ENCODE measurements at regions of chr7 and their contacts with region 1.

Region 1: DNA sequence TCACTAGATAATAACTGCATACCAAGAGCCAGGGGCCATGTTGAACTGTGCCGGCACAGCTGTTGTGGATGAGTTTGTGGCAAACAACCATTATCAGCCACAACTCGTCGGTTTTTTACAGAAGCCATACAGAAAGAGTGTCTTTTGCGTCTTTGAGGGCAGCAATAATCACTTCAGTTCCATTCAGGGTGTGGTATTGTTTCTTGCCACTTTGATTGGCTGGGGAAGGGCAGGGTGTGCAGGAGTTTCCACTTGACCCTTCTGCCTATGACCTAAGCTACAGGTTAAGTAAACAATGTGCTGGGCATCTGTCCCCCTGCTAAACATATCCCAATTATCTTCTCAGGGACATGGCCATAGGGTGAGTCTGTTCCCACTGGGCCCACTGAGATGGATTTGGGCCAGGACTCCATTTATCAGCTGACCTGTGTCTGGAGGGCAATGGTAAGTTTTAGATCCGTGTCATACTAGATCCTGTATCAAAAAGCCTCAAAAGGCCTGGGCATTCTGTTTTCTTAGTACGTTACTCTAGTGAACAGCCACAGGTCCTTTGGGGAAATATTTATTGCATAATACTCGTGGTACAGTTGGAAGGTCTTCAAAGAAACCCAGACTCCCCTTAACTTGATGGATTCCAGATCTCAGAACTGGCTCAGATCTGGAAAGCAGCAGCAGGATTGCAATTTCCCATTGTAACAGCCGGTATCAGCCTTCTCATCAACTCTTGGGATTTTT is 15.9 kb downstream of the ZNF3 start:
- DNase-seq: no peak
- ATAC-seq: no peak
- H3K4me3 Mint-ChIP-seq: no peak overlapping the region
- H3K27ac Mint-ChIP-seq: no peak overlapping the region
- H3K4me1 Mint-ChIP-seq: no peaks in the 10 kb centered on the region
- H3K27me3 Mint-ChIP-seq: no peaks in the 10 kb centered on the region
- CTCF ChIP-seq: no peak

Region 2: GRCh38 chr7:100003711-100004661 is 61.6 kb before region 1 on chr7:
- CTCF ChIA-PET with region 1: no interaction called
- POLR2A ChIA-PET with region 1: interaction called, 10 read pairs
- intact Hi-C with region 1: no loop called
- DNase-seq: no peak
- ATAC-seq: no peak
- H3K4me3 Mint-ChIP-seq: no peak overlapping the region
- H3K27ac Mint-ChIP-seq: no peak overlapping the region
- H3K4me1 Mint-ChIP-seq: no peaks in the 10 kb centered on the region
- H3K27me3 Mint-ChIP-seq: no peaks in the 10 kb centered on the region
- CTCF ChIP-seq: no peak